Calu3 (cell line): ENCODE measurements at regions of chr18 and their contacts with region 1.

Region 1: DNA sequence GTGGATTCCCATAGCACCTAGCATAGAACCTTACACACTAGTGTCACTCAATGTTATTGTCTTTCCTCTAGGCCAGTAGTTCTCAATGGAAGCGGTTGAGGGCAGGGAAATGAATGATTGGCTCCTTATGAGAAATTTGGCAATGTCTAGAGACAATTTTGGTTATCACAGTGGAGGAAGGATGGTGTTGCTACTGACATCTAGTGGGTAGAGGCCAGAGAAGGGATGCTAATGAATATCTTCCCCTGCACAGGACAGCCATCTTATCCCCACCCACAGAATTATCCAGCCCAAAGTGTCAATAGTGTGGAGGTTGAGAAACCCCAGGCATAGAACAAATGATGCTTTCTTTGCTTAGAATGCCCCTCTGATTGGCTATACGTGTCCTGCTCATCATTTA is 15.8 kb downstream of the C18orf63 start:
- DNase-seq: peak; percentile 24
- H3K4me3 Mint-ChIP-seq: no peak overlapping the region
- H3K27ac Mint-ChIP-seq: no peak overlapping the region
- H3K4me1 Mint-ChIP-seq: no peaks in the 10 kb centered on the region
- H3K27me3 Mint-ChIP-seq: no peaks in the 10 kb centered on the region
- CTCF ChIP-seq: peak; percentile 29

Region 2: GRCh38 chr18:74242438-74243096 is 88.8 kb before region 1 on chr18:
- CTCF ChIA-PET with region 1: no interaction called
- intact Hi-C with region 1: loop called (anchors 1 kb)
- DNase-seq: peak; percentile 34
- H3K4me3 Mint-ChIP-seq: peak overlapping the region; percentile 31
- H3K27ac Mint-ChIP-seq: peak overlapping the region; percentile 51
- H3K4me1 Mint-ChIP-seq: peaks cover 32% of the 10 kb centered on the region
- H3K27me3 Mint-ChIP-seq: no peaks in the 10 kb centered on the region
- CTCF ChIP-seq: no peak